PC-9 (cell line): ENCODE measurements at regions of chr2 and their contacts with region 1.

Region 1: GRCh38 chr2:120793677-120794403 is 58.2 kb downstream of the GLI2 start:
- DNase-seq: peak in 1 of 2 experiments; percentile 49
- H3K4me3 ChIP-seq: no peak overlapping the region
- H3K27ac ChIP-seq: no peak overlapping the region
- H3K4me1 ChIP-seq: peaks cover 29% of the 10 kb centered on the region
- H3K27me3 ChIP-seq: no peaks in the 10 kb centered on the region
- CTCF ChIP-seq: no peak

Region 2: GRCh38 chr2:120703330-120703994 is 90.4 kb before region 1 on chr2:
- CTCF ChIA-PET with region 1: no interaction called
- POLR2A ChIA-PET with region 1: no interaction called
- intact Hi-C with region 1: loop called (anchors 5 kb)
- DNase-seq: no peak
- H3K4me3 ChIP-seq: no peak overlapping the region
- H3K27ac ChIP-seq: no peak overlapping the region
- H3K4me1 ChIP-seq: no peaks in the 10 kb centered on the region
- H3K27me3 ChIP-seq: peaks cover 5% of the 10 kb centered on the region; the same call in 1 of the 2 replicates
- CTCF ChIP-seq: no peak

Region 3: GRCh38 chr2:120779781-120780283 is 14.0 kb before region 1 on chr2:
- CTCF ChIA-PET with region 1: no interaction called
- POLR2A ChIA-PET with region 1: no interaction called
- intact Hi-C with region 1: loop called (anchors 1 kb)
- DNase-seq: peak; percentile 58 to 60
- H3K4me3 ChIP-seq: no peak overlapping the region
- H3K27ac ChIP-seq: no peak overlapping the region
- H3K4me1 ChIP-seq: no peaks in the 10 kb centered on the region
- H3K27me3 ChIP-seq: peaks cover 31% of the 10 kb centered on the region
- CTCF ChIP-seq: no peak; the same call in 1 of the 2 replicates

Region 4: DNA sequence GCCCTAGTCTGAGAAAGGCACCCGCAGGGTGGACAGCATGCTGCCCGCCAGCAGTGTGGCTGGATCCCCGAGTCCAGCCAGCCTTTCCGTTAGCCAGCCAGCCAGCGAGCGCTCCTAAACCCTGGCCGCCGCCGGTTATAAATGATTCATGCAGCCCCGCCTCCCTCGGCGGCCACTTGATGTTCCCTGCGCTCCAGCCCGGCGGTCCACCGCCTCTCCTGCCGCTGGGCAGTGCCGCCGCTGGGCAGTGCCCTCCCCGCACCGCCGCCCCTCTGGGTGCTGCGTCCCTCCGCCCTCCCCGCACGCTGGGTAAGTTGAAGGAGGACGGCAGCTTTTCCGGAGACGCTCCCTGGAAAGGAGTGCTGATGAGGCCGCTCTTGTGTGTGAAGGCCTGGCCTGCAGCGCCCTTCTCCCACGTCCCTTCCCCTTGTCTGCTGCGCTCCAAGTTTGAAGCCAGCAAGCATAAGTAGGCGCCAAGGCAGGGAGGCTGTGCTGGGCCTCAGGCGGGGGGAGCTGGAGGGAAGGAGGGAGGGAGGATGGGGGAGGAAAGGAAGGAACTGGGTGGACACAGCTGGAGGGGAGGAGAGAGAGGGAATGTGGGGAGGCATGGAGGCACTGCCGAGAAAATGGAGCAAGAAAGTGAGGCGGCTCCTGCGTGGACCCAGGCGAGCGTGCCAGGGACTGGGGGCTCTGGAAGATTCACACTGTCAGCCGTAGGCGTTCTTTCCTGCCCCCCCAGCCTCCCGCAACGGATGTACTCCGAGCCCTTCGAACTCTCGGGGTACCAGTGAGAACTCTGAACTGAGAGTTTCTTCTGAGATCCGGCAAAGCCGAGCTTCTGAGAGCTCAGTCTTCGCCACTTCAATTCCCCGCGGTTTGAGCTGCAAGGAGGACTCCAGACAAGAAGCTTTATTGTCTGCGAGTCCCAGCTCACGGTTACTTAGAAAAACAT is 73.7 kb after region 1 on chr2:
- CTCF ChIA-PET with region 1: no interaction called
- POLR2A ChIA-PET with region 1: no interaction called
- intact Hi-C with region 1: loop called (anchors 2 kb)
- DNase-seq: peak in 1 of 2 experiments; percentile 74
- H3K4me3 ChIP-seq: no peak overlapping the region
- H3K27ac ChIP-seq: no peak overlapping the region
- H3K4me1 ChIP-seq: peaks cover 9% of the 10 kb centered on the region; the same call in 1 of the 2 replicates
- H3K27me3 ChIP-seq: peaks cover 52% of the 10 kb centered on the region
- CTCF ChIP-seq: no peak

Region 5: GRCh38 chr2:120914839-120915521 is 121.1 kb after region 1 on chr2:
- CTCF ChIA-PET with region 1: no interaction called
- POLR2A ChIA-PET with region 1: no interaction called
- intact Hi-C with region 1: loop called (anchors 5 kb)
- DNase-seq: peak; percentile 46 to 87
- H3K4me3 ChIP-seq: no peak overlapping the region
- H3K27ac ChIP-seq: no peak overlapping the region
- H3K4me1 ChIP-seq: peaks cover 21% of the 10 kb centered on the region
- H3K27me3 ChIP-seq: no peaks in the 10 kb centered on the region
- CTCF ChIP-seq: no peak

Region 6: DNA sequence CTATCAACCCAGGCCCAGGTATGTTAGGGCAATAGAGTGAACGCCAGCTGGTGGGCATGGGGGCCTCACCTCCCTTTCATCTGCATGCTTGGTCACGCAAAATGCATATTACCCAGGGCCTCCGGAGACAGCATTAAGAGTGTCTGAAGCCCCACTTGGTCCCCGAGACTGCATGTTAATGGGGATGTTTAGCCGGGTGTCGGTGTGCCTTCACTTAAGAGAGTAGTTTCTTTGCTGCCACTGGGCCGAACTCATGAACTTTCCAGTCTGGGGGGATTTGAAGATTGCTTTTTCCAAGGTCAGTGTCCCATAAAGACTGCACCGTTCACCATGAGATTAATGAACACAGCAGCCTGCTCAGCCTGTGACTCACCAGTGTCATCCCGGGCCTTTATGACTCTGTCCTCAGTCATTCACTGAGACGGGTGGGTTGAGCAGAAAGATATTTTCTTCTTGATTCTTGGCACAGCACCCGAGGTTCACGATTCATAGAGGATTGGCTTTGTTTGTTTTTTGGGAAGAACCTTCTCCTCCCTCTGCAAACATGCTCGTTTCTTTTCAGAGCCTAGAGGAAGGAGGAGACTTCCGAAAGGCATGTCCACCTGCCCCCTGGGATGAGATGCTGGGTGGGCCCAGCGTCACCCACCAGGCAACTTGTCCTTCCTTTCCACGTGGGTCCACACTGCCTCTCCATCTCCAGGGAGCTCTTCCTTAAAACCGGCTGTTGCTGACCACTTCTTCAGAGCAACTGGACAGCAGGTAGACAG is 140.9 kb after region 1 on chr2:
- CTCF ChIA-PET with region 1: no interaction called
- POLR2A ChIA-PET with region 1: no interaction called
- intact Hi-C with region 1: loop called (anchors 5 kb)
- DNase-seq: peak; percentile 74 to 82
- H3K4me3 ChIP-seq: no peak overlapping the region
- H3K27ac ChIP-seq: no peak overlapping the region
- H3K4me1 ChIP-seq: peaks cover 25% of the 10 kb centered on the region
- H3K27me3 ChIP-seq: no peaks in the 10 kb centered on the region
- CTCF ChIP-seq: no peak